ENCODE measurements at regions of chr10 and their contacts with region 1.

Region 1: DNA sequence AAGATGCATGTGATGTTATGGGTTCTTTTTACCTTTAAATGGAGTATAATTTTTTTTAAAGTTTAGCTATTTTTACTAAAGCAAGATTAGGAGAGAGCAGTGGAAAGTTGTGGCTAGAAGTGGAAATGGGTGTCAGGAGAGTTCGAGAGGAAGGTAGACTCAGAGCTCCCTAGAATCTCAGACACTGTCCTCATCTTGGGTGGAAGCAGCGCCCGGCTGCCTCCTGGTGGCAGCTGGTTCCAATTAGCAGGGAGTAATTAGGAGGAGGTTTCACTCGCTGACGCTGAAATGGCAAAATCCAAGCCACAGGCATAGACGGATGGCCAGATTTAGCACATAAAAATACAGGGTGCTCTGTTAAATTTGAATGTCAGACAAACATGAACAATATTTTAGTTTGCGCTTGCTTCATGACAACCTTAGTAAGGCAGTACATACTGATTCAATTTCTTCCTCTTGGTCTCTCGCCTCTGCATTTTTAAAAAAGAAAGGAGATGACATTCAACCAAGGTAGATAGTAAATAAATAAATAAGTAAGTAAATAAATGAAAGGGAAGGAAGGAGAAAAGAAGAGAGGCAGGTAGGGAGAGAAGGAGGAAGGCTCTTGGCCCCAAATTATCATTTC is 58.5 kb downstream of the LGI1 start:
- DNase-seq: peak; percentile 21 to 62
- H3K4me3 ChIP-seq: no peak overlapping the region
- H3K27ac ChIP-seq: no peak overlapping the region
- H3K4me1 ChIP-seq: peaks cover 0 to 2% (median under 1%) of the 10 kb centered on the region in 4 experiments; a peak in 2 of 7 replicates
- H3K27me3 ChIP-seq: no peaks in the 10 kb centered on the region
- CTCF ChIP-seq: peak; percentile 77 to 86 (median 82)
- EP300 ChIP-seq: no peak
- POLR2A ChIP-seq: no peak
- RAD21 ChIP-seq: peak; percentile 78 to 85

Region 2: GRCh38 chr10:93445097-93445960 is 370.9 kb before region 1 on chr10:
- CTCF ChIA-PET with region 1: no interaction called
- POLR2A ChIA-PET with region 1: no interaction called
- DNase-seq: peak; percentile 84 to 88
- H3K4me3 ChIP-seq: peak overlapping the region in 2 of 4 experiments; percentile 7 to 29; a peak in 2 of 8 replicates
- H3K27ac ChIP-seq: peak overlapping the region; percentile 83
- H3K4me1 ChIP-seq: peaks cover 8 to 22% (median 10%) of the 10 kb centered on the region in 4 experiments; a peak in 6 of 7 replicates
- H3K27me3 ChIP-seq: no peaks in the 10 kb centered on the region
- CTCF ChIP-seq: no peak
- EP300 ChIP-seq: peak; percentile 19 to 94; a peak in 2 of 3 replicates
- POLR2A ChIP-seq: peak; percentile 55 to 78
- RAD21 ChIP-seq: peak in 1 of 2 experiments; percentile 21; a peak in 1 of 4 replicates

Region 3: GRCh38 chr10:93702211-93703001 is 113.8 kb before region 1 on chr10 and contains the start of gene FRA10AC1:
- CTCF ChIA-PET with region 1: interaction called, 11 read pairs
- POLR2A ChIA-PET with region 1: no interaction called
- DNase-seq: peak; percentile 65 to 97
- H3K4me3 ChIP-seq: peak within 1 kb of the TSS; percentile 76 to 85 (median 77)
- H3K27ac ChIP-seq: 0 out of 2 replicates have a peak within 1 kb of the TSS, but pooled peaks have one; percentile 24
- H3K4me1 ChIP-seq: peaks cover 0 to 3% (median 1%) of the 10 kb centered on the region in 4 experiments; a peak in 1 of 7 replicates
- H3K27me3 ChIP-seq: no peaks in the 10 kb centered on the region
- CTCF ChIP-seq: peak; percentile 45 to 62 (median 51); a peak in 3 of 4 replicates
- EP300 ChIP-seq: peak in 1 of 2 experiments; percentile 94; a peak in 2 of 3 replicates
- POLR2A ChIP-seq: peak; percentile 81 to 88
- RAD21 ChIP-seq: peak; percentile 46 to 59
- total RNA-seq, gene FRA10AC1: 11.9 and 13.5 TPM in 2 replicates

Region 4: GRCh38 chr10:93766918-93767317 is 49.3 kb before region 1 on chr10:
- CTCF ChIA-PET with region 1: interaction called, 14 read pairs
- POLR2A ChIA-PET with region 1: no interaction called
- DNase-seq: no peak
- H3K4me3 ChIP-seq: no peak overlapping the region
- H3K27ac ChIP-seq: no peak overlapping the region
- H3K4me1 ChIP-seq: peaks cover 0 to 6% (median 0%) of the 10 kb centered on the region in 4 experiments; a peak in 2 of 7 replicates
- H3K27me3 ChIP-seq: no peaks in the 10 kb centered on the region
- CTCF ChIP-seq: no peak
- EP300 ChIP-seq: no peak
- POLR2A ChIP-seq: no peak
- RAD21 ChIP-seq: no peak

Region 5: GRCh38 chr10:93827056-93827804 is 11.0 kb after region 1 on chr10:
- CTCF ChIA-PET with region 1: interaction called, 10 read pairs
- POLR2A ChIA-PET with region 1: no interaction called
- DNase-seq: no peak
- H3K4me3 ChIP-seq: no peak overlapping the region
- H3K27ac ChIP-seq: no peak overlapping the region
- H3K4me1 ChIP-seq: peaks cover 0 to 2% (median 0%) of the 10 kb centered on the region in 4 experiments; a peak in 1 of 7 replicates
- H3K27me3 ChIP-seq: no peaks in the 10 kb centered on the region; a peak in 2 of 7 replicates
- CTCF ChIP-seq: no peak
- EP300 ChIP-seq: no peak
- POLR2A ChIP-seq: no peak
- RAD21 ChIP-seq: no peak

Region 6: GRCh38 chr10:93859049-93859655 is 42.9 kb after region 1 on chr10:
- CTCF ChIA-PET with region 1: interaction called, 34 read pairs
- POLR2A ChIA-PET with region 1: no interaction called
- DNase-seq: no peak
- H3K4me3 ChIP-seq: no peak overlapping the region
- H3K27ac ChIP-seq: no peak overlapping the region
- H3K4me1 ChIP-seq: no peaks in the 10 kb centered on the region
- H3K27me3 ChIP-seq: no peaks in the 10 kb centered on the region; a peak in 2 of 7 replicates
- CTCF ChIP-seq: peak in 2 of 3 experiments; percentile 25 to 39; a peak in 2 of 4 replicates
- EP300 ChIP-seq: no peak
- POLR2A ChIP-seq: no peak
- RAD21 ChIP-seq: peak; percentile 56 to 71

Region 7: GRCh38 chr10:93941606-93942005 is 125.4 kb after region 1 on chr10:
- CTCF ChIA-PET with region 1: no interaction called
- POLR2A ChIA-PET with region 1: no interaction called
- DNase-seq: no peak
- H3K4me3 ChIP-seq: no peak overlapping the region
- H3K27ac ChIP-seq: no peak overlapping the region
- H3K4me1 ChIP-seq: no peaks in the 10 kb centered on the region
- H3K27me3 ChIP-seq: no peaks in the 10 kb centered on the region
- CTCF ChIP-seq: no peak
- EP300 ChIP-seq: no peak
- POLR2A ChIP-seq: no peak
- RAD21 ChIP-seq: no peak

Measured in H1 (cell line).